Activated CD4-positive, alpha-beta T cell treated with anti-CD3 and anti-CD28 coated beads, Interleukin-2, amount 10 ng/mL, durations not matched to agents 24 days and 14 days (primary cell): ENCODE measurements at regions of chr5 and their contacts with region 1.

Region 1: DNA sequence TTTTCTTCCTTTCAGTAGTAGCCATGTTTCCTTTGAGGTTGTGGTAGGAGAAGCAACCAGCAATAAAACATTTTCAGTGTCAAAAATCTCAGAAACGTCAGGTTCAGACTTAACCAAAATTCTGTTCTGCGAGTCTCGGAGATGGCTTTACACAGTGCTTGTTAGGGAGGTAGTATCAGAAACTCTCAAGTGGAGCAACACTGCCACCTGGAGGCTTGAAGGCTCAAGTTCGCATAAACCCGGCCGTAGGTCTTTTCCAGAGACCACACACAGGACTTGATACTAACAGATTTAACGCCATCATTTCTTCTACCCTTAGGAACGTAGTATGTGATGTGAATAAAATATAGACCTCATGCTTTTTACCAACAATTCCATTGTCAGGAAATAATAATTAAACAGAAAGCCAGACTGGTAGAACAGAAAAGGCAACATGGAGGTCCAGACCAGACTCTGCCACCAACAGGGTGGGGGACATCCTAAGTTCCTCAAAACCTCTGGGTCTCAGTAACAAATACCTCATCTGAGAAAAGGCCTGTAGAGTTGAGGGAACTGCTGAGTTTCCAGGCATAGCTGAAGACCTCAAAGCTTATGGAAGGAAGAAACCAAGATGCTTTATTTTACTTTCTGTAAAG is 8.5 kb downstream of the PTGER4 start:
- DNase-seq: peak; percentile 95
- H3K4me3 Mint-ChIP-seq: peak overlapping the region; percentile 99
- H3K27ac Mint-ChIP-seq: peak overlapping the region; percentile 92
- H3K4me1 Mint-ChIP-seq: peaks cover 62% of the 10 kb centered on the region
- H3K27me3 Mint-ChIP-seq: no peaks in the 10 kb centered on the region

Region 2: GRCh38 chr5:39209924-39210323 is 1478.3 kb before region 1 on chr5:
- intact Hi-C with region 1: loop called (anchors 5 kb)
- DNase-seq: peak; percentile 95
- H3K4me3 Mint-ChIP-seq: peak overlapping the region; percentile 75
- H3K27ac Mint-ChIP-seq: peak overlapping the region; percentile 92
- H3K4me1 Mint-ChIP-seq: peaks cover 79% of the 10 kb centered on the region
- H3K27me3 Mint-ChIP-seq: no peaks in the 10 kb centered on the region

Region 3: GRCh38 chr5:39948867-39949468 is 739.3 kb before region 1 on chr5:
- intact Hi-C with region 1: loop called (anchors 1 kb)
- DNase-seq: peak; percentile 90
- H3K4me3 Mint-ChIP-seq: no peak overlapping the region
- H3K27ac Mint-ChIP-seq: peak overlapping the region; percentile 7
- H3K4me1 Mint-ChIP-seq: peaks cover 3% of the 10 kb centered on the region
- H3K27me3 Mint-ChIP-seq: peaks cover 2% of the 10 kb centered on the region

Region 4: GRCh38 chr5:40223884-40224402 is 464.3 kb before region 1 on chr5:
- intact Hi-C with region 1: loop called (anchors 1 kb)
- DNase-seq: peak; percentile 82
- H3K4me3 Mint-ChIP-seq: peak overlapping the region; percentile 58
- H3K27ac Mint-ChIP-seq: peak overlapping the region; percentile 90
- H3K4me1 Mint-ChIP-seq: peaks cover 43% of the 10 kb centered on the region
- H3K27me3 Mint-ChIP-seq: no peaks in the 10 kb centered on the region

Region 5: GRCh38 chr5:40383749-40384651 is 304.2 kb before region 1 on chr5:
- intact Hi-C with region 1: loop called (anchors 1 kb)
- DNase-seq: peak; percentile 80
- H3K4me3 Mint-ChIP-seq: peak overlapping the region; percentile 63
- H3K27ac Mint-ChIP-seq: peak overlapping the region; percentile 86
- H3K4me1 Mint-ChIP-seq: peaks cover 70% of the 10 kb centered on the region
- H3K27me3 Mint-ChIP-seq: no peaks in the 10 kb centered on the region

Region 6: DNA sequence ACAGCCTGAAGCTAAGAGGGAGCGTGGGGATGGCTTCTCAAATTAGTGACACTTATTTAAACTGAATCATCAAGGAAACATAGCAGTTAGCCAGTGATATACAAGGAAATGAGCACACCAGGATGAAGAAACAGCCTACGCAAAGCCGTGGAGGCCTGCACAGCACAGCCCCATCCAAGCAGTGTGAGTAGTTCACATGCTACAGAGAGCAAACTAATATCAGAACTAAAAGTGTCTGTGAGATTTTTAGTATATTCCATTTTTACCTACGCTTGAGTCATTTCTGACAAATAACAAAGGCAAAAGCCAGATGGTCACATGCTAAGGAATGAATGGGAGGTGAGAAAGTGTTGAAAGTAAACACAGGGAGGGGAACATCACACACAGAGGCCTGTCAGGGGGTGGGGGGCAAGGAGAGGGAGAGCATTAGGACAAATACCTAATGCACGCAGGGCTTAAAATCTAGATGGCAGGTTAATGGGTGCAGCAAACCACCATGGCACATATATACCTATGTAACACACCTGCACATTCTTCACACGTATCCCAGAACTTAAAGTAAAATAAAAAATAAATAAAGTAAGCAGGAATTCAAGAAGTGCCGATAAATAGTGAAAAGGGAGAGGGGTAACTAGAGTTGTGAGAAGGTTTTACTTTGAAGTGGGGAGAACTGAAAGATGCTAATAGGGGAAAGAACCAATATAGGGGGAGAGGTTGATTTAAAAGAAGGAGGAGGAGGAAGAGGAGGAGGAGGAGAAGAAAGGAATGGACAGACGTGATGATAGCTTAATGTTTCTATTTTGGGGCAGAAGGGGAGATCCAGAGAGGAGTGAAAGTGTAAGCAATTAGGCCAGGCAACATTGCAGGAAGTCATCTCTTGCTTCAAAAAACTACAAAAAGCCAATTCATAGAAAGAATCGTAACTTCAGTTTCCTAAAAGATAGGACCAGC is 109.5 kb before region 1 on chr5:
- intact Hi-C with region 1: loop called (anchors 2 kb)
- DNase-seq: peak; percentile 76
- H3K4me3 Mint-ChIP-seq: peak overlapping the region; percentile 45
- H3K27ac Mint-ChIP-seq: peak overlapping the region; percentile 93
- H3K4me1 Mint-ChIP-seq: peaks cover 27% of the 10 kb centered on the region
- H3K27me3 Mint-ChIP-seq: no peaks in the 10 kb centered on the region

Region 7: DNA sequence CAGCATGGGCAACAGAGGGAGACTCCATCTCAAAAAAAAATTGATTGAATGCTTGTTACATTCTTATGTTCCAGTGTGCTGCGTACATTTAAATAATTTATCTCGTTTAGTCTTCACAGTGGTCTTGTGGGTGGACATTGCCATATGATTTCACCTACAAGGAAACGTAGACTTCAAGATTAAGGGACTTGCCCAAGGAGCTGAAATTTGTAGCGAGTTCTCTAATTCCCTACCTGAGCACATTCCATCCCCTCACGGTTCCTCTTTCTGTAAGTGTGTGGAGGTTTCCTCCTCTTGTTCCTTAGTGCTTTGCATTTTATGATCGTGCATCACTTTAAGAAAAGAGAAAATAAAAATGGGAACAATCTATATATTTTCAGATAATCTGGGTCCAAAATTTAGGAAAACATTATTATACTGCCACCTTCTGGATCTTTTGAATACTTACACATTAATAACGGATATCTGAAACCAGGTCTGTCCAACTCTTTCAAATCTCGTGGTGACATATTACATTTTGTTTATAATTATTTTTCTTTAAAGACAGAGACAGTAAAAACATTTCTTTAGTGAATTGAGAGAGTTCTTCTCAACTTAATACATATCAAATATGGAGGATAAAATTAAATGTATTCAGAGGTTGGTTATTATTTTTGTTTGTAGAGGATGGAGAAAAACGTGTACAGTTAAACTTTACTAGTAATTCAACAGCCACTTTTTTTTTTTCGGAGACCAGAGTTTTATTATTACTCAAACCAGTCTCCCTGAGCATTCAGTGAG is 191.1 kb after region 1 on chr5:
- intact Hi-C with region 1: loop called (anchors 2 kb)
- DNase-seq: no peak
- H3K4me3 Mint-ChIP-seq: no peak overlapping the region
- H3K27ac Mint-ChIP-seq: no peak overlapping the region
- H3K4me1 Mint-ChIP-seq: peaks cover 3% of the 10 kb centered on the region
- H3K27me3 Mint-ChIP-seq: peaks cover 13% of the 10 kb centered on the region